Activated naive CD4-positive, alpha-beta T cell treated with anti-CD3 and anti-CD28 coated beads, Interleukin-2, amount 10 ng/mL, durations not matched to agents 7 days and 5 days (primary cell): ENCODE measurements at regions of chr20 and their contacts with region 1.

Region 1: GRCh38 chr20:5126512-5127203 is at the start of gene CDS2:
- DNase-seq: peak; percentile 100
- H3K4me3 Mint-ChIP-seq: peak within 1 kb of the TSS; percentile 100
- H3K27ac Mint-ChIP-seq: peak within 1 kb of the TSS; percentile 99
- H3K4me1 Mint-ChIP-seq: peaks cover 69% of the 10 kb centered on the region
- H3K27me3 Mint-ChIP-seq: no peaks in the 10 kb centered on the region

Region 2: GRCh38 chr20:5024982-5025381 is 101.7 kb before region 1 on chr20:
- CTCF ChIA-PET with region 1: no interaction called
- DNase-seq: no peak
- H3K4me3 Mint-ChIP-seq: no peak overlapping the region
- H3K27ac Mint-ChIP-seq: no peak overlapping the region
- H3K4me1 Mint-ChIP-seq: no peaks in the 10 kb centered on the region
- H3K27me3 Mint-ChIP-seq: no peaks in the 10 kb centered on the region

Region 3: DNA sequence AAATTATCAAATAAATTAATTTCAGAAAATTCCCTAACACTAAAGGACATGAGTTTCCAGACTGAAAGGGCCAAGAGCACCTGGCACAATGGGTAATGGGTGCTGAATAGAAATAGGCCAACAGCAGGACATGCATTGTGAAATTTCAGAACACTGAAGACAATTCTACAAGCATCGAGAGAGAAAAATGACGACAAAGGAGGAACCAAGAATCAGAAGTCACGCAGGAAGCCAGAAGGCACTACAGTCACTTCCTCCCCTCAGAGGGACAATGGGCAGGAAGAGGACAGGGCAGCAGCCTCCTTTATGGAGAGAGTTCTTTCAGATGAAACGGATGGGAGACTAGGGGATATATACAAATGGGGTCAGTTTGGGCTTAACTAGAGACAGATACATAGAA is 36.5 kb before region 1 on chr20:
- CTCF ChIA-PET with region 1: no interaction called
- DNase-seq: peak; percentile 38
- H3K4me3 Mint-ChIP-seq: no peak overlapping the region
- H3K27ac Mint-ChIP-seq: peak overlapping the region; percentile 80
- H3K4me1 Mint-ChIP-seq: peaks cover 28% of the 10 kb centered on the region
- H3K27me3 Mint-ChIP-seq: no peaks in the 10 kb centered on the region

Region 4: DNA sequence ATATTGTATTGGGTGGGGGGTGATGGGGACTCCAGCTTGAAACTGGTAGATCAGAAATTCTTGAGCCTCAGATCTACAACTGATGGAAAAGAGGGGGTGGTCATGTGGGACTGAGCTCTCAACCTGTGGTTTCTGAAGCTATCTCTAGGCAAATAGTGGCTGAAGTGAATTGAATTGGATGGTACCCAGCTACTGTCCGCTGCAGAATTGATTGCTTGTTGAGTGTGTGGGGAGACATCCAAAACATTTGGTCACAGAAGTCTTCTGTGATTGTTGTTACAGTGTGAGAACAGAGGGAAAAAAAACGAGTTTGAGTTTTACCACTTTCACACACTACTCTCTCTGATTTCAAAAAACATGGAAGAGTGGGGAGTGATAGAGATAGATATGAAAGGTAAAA is 15.0 kb after region 1 on chr20:
- CTCF ChIA-PET with region 1: no interaction called
- DNase-seq: no peak
- H3K4me3 Mint-ChIP-seq: no peak overlapping the region
- H3K27ac Mint-ChIP-seq: no peak overlapping the region
- H3K4me1 Mint-ChIP-seq: peaks cover 16% of the 10 kb centered on the region
- H3K27me3 Mint-ChIP-seq: no peaks in the 10 kb centered on the region

Region 5: DNA sequence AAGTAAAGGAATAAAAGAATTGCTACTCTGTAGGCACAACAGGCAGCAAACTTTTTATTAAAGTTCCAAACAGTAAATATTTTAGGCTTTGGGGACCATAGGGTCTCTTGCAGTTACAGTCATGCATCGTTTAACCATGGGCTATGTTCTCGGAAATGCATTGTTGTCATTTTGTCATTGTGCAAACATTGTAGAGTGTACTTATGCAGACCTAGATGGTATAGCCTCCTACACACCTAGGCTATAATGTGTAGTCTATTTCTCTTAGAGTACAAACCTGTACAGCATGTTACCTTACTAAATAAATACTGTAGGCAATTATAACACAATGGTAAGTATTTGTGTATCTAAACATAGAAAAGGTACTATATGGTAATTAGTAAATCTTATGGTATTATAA is 54.8 kb after region 1 on chr20:
- CTCF ChIA-PET with region 1: interaction called, 14 read pairs
- DNase-seq: no peak
- H3K4me3 Mint-ChIP-seq: no peak overlapping the region
- H3K27ac Mint-ChIP-seq: no peak overlapping the region
- H3K4me1 Mint-ChIP-seq: no peaks in the 10 kb centered on the region
- H3K27me3 Mint-ChIP-seq: no peaks in the 10 kb centered on the region

Region 6: GRCh38 chr20:5191829-5192569 is 65.3 kb after region 1 on chr20:
- CTCF ChIA-PET with region 1: interaction called, 108 read pairs
- DNase-seq: peak; percentile 57
- H3K4me3 Mint-ChIP-seq: no peak overlapping the region
- H3K27ac Mint-ChIP-seq: peak overlapping the region; percentile 65
- H3K4me1 Mint-ChIP-seq: peaks cover 13% of the 10 kb centered on the region
- H3K27me3 Mint-ChIP-seq: no peaks in the 10 kb centered on the region

Region 7: DNA sequence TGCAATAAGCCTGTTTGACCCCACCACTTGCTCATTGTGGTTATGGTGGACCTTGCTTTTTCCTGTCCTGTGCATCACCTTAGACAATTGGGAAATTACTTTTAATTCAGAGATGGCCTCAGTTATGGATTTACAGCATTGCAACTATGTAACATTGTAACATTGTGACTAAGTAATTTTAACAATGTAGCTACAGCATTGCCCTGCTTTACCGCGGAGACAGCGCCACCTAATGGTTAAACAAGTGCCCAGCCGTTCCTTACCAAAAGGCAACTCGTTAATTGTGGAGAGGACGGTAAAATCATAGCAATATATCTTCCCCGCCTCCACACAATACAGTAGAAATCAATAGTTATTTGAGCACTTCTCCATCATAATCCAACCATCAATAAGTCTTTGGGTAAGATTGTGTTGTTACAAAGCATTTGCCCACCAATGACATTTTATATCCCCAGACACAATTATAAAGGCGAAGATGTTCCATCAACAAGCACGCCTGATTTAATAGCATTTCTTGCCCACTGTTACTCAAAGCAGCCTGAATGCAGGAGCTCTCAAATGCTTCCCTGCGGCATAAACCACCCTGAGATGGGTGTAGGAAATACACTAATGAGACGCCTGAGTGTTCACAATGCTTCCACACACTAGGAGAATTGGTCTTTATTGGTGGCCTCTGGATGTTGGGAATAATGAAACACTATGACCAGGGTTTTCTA is 96.4 kb after region 1 on chr20:
- CTCF ChIA-PET with region 1: interaction called, 30 read pairs
- DNase-seq: peak; percentile 78
- H3K4me3 Mint-ChIP-seq: no peak overlapping the region
- H3K27ac Mint-ChIP-seq: no peak overlapping the region
- H3K4me1 Mint-ChIP-seq: no peaks in the 10 kb centered on the region
- H3K27me3 Mint-ChIP-seq: no peaks in the 10 kb centered on the region

Region 8: DNA sequence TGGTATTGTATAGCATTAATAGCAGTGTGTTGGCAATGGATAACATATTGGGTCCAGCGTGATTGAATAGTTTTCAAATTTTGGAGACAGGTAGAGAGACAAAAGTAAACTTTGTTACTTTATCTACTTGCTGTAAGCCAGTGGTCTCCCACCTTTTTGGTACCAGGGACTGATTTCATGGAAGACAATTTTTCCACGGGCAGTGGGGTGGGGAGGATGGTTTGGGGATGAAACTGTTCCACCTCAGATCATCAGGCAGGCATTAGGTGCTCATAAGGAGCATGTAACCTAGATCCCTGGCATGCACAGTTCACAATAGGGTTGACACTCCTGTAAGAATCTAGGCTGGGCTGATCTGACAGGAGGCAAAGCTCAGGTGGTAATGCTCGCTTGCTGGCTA is 204.7 kb after region 1 on chr20:
- CTCF ChIA-PET with region 1: no interaction called
- DNase-seq: no peak
- H3K4me3 Mint-ChIP-seq: no peak overlapping the region
- H3K27ac Mint-ChIP-seq: no peak overlapping the region
- H3K4me1 Mint-ChIP-seq: no peaks in the 10 kb centered on the region
- H3K27me3 Mint-ChIP-seq: peaks cover 8% of the 10 kb centered on the region